Activated CD8-positive, alpha-beta T cell treated with anti-CD3 and anti-CD28 coated beads, Interleukin-2, amount 10 ng/mL, durations not matched to agents 7 days and 5 days (primary cell): ENCODE measurements at regions of chr4 and their contacts with region 1.

Region 1: DNA sequence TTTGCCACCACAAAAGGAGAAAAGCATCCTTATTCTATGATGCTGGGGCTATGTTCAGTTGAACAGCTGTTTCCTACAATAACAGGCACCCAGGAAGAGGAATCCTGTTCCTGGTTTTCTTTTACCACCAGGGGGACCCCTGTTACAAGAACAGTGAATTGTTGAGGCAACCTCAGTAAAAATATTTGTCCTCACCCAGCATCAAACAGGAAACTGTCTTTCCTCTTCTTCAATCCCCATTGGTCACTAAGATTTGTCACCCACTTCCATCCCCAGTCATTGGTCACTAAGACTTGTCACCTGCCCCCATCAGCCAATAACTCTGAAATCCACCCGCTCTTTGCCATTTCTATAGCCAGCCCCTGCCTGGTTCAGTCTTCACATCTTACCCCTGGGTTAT is 143.5 kb upstream of the GALNT7 start:
- DNase-seq: peak; percentile 36
- ATAC-seq: peak; percentile 63
- H3K4me3 Mint-ChIP-seq: no peak overlapping the region
- H3K27ac Mint-ChIP-seq: no peak overlapping the region
- H3K4me1 Mint-ChIP-seq: peaks cover 4% of the 10 kb centered on the region
- H3K27me3 Mint-ChIP-seq: peaks cover 3% of the 10 kb centered on the region

Region 2: DNA sequence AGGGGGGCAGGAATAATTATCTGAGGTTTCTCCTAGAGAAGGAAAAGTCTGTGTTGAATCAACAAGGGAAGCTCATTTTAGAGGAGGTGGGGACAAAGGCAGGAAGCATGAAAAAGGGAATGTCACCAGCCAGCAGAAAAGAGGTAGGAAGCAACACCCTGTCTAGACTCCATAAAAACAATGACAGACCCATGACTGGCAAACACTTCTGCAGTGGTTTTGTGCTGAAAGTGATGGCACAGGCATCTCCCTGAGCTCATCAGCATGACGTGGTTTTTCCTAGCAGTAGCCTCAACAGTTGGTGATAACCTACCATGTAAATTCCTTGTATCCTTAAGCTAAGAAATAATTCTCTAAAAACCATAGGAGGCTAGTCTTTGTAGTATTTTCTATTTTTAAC is 32.8 kb after region 1 on chr4:
- CTCF ChIA-PET with region 1: no interaction called
- POLR2A ChIA-PET with region 1: no interaction called
- DNase-seq: no peak
- ATAC-seq: no peak
- H3K4me3 Mint-ChIP-seq: no peak overlapping the region
- H3K27ac Mint-ChIP-seq: no peak overlapping the region
- H3K4me1 Mint-ChIP-seq: no peaks in the 10 kb centered on the region
- H3K27me3 Mint-ChIP-seq: peaks cover 2% of the 10 kb centered on the region

Region 3: GRCh38 chr4:173257732-173258717 is 232.9 kb after region 1 on chr4:
- CTCF ChIA-PET with region 1: interaction called, 30 read pairs
- POLR2A ChIA-PET with region 1: no interaction called
- DNase-seq: peak; percentile 68
- ATAC-seq: peak; percentile 84
- H3K4me3 Mint-ChIP-seq: no peak overlapping the region
- H3K27ac Mint-ChIP-seq: no peak overlapping the region
- H3K4me1 Mint-ChIP-seq: no peaks in the 10 kb centered on the region
- H3K27me3 Mint-ChIP-seq: no peaks in the 10 kb centered on the region